ENCODE measurements at regions of chr9 and their contacts with region 1.

Region 1: DNA sequence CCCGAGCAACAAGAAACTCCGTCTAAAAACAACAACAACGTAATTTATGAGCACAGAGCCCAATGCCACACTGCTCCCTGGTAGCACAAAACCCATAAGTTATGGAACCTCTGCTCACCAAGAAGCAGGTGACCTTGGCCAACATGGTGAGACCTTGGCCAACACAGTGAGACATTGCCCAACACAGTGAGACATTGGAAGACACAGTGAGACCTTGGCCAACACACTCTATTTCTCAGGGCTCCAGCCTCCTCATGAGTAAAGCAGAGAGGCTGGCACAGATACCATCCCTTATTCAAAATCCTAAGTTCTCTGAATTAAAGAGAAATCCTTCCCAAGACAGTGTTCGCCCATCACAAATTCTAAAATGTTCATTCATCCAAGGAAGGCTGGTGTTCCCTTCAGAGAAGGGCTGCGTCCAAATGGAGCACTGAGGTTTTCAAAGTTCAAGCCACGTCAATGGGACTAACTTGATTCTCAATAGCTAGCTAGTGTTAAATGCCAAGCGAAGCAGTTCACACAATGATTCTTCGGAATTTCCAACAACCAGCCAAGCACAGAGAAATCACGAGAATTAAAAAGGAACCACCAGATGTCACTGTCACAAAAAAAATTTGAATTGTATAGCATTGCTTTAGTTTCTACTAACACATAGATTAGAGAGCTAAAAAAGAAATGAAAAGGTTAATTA is 29.5 kb downstream of the TTC39B start:
- DNase-seq: peak; percentile 20
- H3K4me3 ChIP-seq: no peak overlapping the region
- H3K27ac ChIP-seq: no peak overlapping the region
- H3K4me1 ChIP-seq: no peaks in the 10 kb centered on the region
- CTCF ChIP-seq: peak; percentile 75

Region 2: DNA sequence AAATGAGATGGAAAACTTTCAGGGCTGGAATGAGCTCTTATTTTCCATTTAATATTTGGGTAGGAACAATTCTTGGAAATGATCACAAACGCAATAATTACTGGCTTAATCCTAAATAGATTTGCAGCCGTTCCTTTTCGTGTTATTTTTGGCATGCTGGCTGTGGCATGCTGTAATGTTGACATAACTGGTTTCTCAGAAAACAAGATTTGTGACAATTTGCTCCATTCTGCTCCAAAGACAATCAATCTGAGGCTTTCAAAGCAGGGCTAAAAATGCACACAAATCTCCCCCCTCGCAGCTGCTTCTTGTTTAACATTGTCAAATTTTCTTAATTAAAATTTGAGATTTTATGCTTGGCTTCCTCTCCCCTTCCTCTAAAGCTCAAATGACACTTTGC is 121.7 kb before region 1 on chr9:
- CTCF ChIA-PET with region 1: no interaction called
- POLR2A ChIA-PET with region 1: no interaction called
- intact Hi-C with region 1: no loop called
- DNase-seq: no peak
- H3K4me3 ChIP-seq: no peak overlapping the region
- H3K27ac ChIP-seq: no peak overlapping the region
- H3K4me1 ChIP-seq: no peaks in the 10 kb centered on the region
- CTCF ChIP-seq: no peak

Region 3: GRCh38 chr9:15416880-15417279 is 139.3 kb after region 1 on chr9:
- CTCF ChIA-PET with region 1: no interaction called
- POLR2A ChIA-PET with region 1: no interaction called
- intact Hi-C with region 1: loop called (anchors 5 kb)
- DNase-seq: peak; percentile 30
- H3K4me3 ChIP-seq: no peak overlapping the region
- H3K27ac ChIP-seq: no peak overlapping the region
- H3K4me1 ChIP-seq: peaks cover 8% of the 10 kb centered on the region
- CTCF ChIP-seq: peak; percentile 69